Caco-2 (cell line): ENCODE measurements at regions of chr17 and their contacts with region 1.

Region 1: DNA sequence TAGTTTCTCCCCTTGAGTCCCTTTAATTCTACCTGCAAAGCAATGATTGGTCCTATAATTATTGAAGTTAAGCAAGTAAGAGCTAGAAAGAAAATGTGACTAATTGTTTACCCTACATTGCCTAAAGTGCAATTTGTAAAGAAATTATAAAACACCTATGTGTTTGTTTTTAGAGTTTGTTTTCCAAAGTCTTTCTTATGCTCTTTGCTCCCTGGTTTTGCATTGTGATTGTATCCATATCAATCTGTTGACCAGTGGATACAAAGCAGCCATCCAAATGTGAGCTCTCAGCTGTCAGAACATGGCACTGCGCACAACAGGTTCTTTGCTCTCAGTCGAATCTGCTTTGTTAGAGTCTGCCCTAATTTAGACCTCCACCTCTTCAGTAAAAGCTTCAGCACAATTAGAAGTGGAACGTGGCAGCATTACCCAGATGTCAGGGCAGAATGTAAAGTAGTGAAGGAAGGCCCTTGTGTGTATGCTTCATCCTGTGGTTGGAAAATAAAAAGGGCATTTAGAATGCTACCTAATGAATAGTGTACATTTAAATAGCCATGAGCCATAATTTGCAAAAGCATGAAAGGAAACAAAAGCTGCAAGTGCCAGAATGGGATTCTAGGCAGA is 70.5 kb downstream of the AATF start:
- DNase-seq: no peak
- H3K4me3 ChIP-seq: no peak overlapping the region
- H3K4me3 Mint-ChIP-seq: no peak overlapping the region
- H3K27ac Mint-ChIP-seq: no peak overlapping the region
- H3K4me1 ChIP-seq: no peaks in the 10 kb centered on the region
- H3K4me1 Mint-ChIP-seq: peaks cover 9% of the 10 kb centered on the region
- H3K27me3 ChIP-seq: no peaks in the 10 kb centered on the region
- H3K27me3 Mint-ChIP-seq: no peaks in the 10 kb centered on the region
- CTCF ChIP-seq: no peak

Region 2: GRCh38 chr17:36705874-36706731 is 313.1 kb before region 1 on chr17:
- CTCF ChIA-PET with region 1: interaction called, 10 read pairs
- POLR2A ChIA-PET with region 1: no interaction called
- intact Hi-C with region 1: no loop called
- DNase-seq: peak; percentile 58 to 66
- H3K4me3 ChIP-seq: no peak overlapping the region
- H3K4me3 Mint-ChIP-seq: no peak overlapping the region
- H3K27ac Mint-ChIP-seq: no peak overlapping the region
- H3K4me1 ChIP-seq: no peaks in the 10 kb centered on the region
- H3K4me1 Mint-ChIP-seq: no peaks in the 10 kb centered on the region
- H3K27me3 ChIP-seq: no peaks in the 10 kb centered on the region; the same call in 1 of the 2 replicates
- H3K27me3 Mint-ChIP-seq: peaks cover 20% of the 10 kb centered on the region
- CTCF ChIP-seq: peak; percentile 80 to 94

Region 3: DNA sequence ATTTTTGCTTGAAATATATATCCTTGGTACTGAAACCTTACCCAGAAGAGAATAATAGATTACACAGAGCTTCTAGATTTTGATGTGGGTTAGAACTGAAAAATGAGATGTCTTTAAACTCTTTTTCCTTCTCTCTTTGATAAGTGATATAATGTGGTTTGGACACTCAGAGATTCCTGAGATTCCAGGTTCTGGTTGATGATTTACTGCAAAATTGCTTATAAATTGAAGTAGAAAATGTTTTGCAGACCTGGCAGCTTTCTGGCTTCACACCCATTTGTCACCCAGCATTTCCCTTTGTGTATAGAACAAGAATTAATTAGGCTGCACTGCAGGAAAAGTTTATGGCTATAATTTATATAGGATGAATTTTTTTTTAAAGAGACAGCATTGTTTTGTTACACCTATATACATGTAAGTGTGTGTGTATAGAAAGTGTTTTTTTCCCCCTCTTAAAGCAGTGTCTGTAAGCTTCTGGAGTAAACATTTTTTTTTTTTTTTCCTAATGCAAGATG is 47.0 kb before region 1 on chr17:
- CTCF ChIA-PET with region 1: no interaction called
- POLR2A ChIA-PET with region 1: no interaction called
- intact Hi-C with region 1: no loop called
- DNase-seq: no peak
- H3K4me3 ChIP-seq: no peak overlapping the region
- H3K4me3 Mint-ChIP-seq: no peak overlapping the region
- H3K27ac Mint-ChIP-seq: no peak overlapping the region
- H3K4me1 ChIP-seq: peaks cover 9% of the 10 kb centered on the region
- H3K4me1 Mint-ChIP-seq: peaks cover 12% of the 10 kb centered on the region
- H3K27me3 ChIP-seq: no peaks in the 10 kb centered on the region
- H3K27me3 Mint-ChIP-seq: no peaks in the 10 kb centered on the region
- CTCF ChIP-seq: no peak